Tibial artery (tissue), 4 donors: ENCODE measurements at regions of chr2 and their contacts with region 1.

Region 1: DNA sequence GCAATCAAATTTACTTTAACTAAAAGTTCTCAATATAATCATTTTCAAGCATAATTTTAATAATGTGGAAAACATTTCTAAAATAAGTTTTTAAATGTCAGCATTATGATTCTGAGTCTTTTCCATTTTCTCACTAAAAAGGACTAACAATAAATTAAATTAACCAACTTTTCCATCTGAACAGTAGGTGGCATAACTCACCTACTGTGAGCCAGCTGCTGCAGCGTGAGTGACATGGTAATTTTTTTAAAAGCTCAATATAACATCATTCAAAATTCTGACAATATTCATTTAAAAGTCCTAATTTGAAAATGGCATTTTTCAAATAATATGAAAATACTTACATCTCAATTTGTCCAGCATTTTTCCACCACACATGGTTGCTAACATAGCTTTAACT is 66.5 kb downstream of the DTNB start:
- DNase-seq: no peak
- H3K4me3 ChIP-seq: no peak overlapping the region
- H3K27ac ChIP-seq: no peak overlapping the region
- H3K4me1 ChIP-seq: no peaks in the 10 kb centered on the region
- H3K27me3 ChIP-seq: no peaks in the 10 kb centered on the region
- CTCF ChIP-seq: peak; percentile 63 to 77

Region 2: GRCh38 chr2:24635181-24635580 is 971.7 kb before region 1 on chr2:
- intact Hi-C with region 1: no loop called
- DNase-seq: no peak
- H3K4me3 ChIP-seq: no peak overlapping the region
- H3K27ac ChIP-seq: no peak overlapping the region
- H3K4me1 ChIP-seq: no peaks in the 10 kb centered on the region
- H3K27me3 ChIP-seq: no peaks in the 10 kb centered on the region
- CTCF ChIP-seq: no peak

Region 3: DNA sequence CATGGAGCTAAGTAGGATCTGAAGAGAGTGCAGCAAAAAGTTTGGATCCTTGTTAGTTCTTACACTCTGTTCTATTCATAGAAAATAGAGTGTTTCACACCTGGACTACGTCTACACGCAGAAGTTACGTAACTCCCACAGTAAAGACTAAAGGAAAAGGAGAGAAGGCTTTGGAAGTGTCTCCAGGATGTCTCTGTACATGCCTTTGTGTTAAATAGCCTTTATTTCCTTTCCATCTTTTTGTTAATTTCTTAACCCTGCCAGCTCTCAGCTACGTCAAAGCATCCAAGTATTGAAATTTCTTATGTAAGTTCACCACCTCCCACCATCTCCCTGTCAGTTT is 58.0 kb after region 1 on chr2:
- intact Hi-C with region 1: loop called (anchors 5 kb)
- DNase-seq: no peak
- H3K4me3 ChIP-seq: no peak overlapping the region
- H3K27ac ChIP-seq: no peak overlapping the region
- H3K4me1 ChIP-seq: peaks cover 0 to 5% (median 1%) of the 10 kb centered on the region in 4 donors
- H3K27me3 ChIP-seq: no peaks in the 10 kb centered on the region
- CTCF ChIP-seq: peak in 1 of 2 experiments; percentile 17